ENCODE measurements at regions of chr11 and their contacts with region 1.

Region 1: GRCh38 chr11:17276236-17277023 is at the start of gene NUCB2:
- DNase-seq: peak; percentile 89 to 98 (median 96)
- ATAC-seq: peak; percentile 90
- H3K4me3 ChIP-seq: peak within 1 kb of the TSS; percentile 77 to 83
- H3K4me3 Mint-ChIP-seq: peak within 1 kb of the TSS; percentile 84
- H3K27ac ChIP-seq: peak within 1 kb of the TSS; percentile 79 to 86
- H3K27ac Mint-ChIP-seq: peak within 1 kb of the TSS; percentile 91
- H3K4me1 ChIP-seq: peaks cover 37% of the 10 kb centered on the region
- H3K4me1 Mint-ChIP-seq: peaks cover 39% of the 10 kb centered on the region
- H3K27me3 ChIP-seq: no peaks in the 10 kb centered on the region
- H3K27me3 Mint-ChIP-seq: no peaks in the 10 kb centered on the region
- CTCF ChIP-seq: no peak
- total RNA-seq, gene NUCB2: 105 TPM

Region 2: GRCh38 chr11:17077520-17078401 is 198.7 kb before region 1 on chr11 and contains the start of gene RPS13:
- CTCF ChIA-PET with region 1: no interaction called
- POLR2A ChIA-PET with region 1: no interaction called
- intact Hi-C with region 1: loop called (anchors 2 to 5 kb)
- DNase-seq: peak; percentile 88 to 99 (median 95)
- ATAC-seq: peak; percentile 94
- H3K4me3 ChIP-seq: peak within 1 kb of the TSS; percentile 86 to 95
- H3K4me3 Mint-ChIP-seq: peak within 1 kb of the TSS; percentile 99
- H3K27ac ChIP-seq: peak within 1 kb of the TSS; percentile 92 to 96
- H3K27ac Mint-ChIP-seq: peak within 1 kb of the TSS; percentile 99
- H3K4me1 ChIP-seq: peaks cover 25% of the 10 kb centered on the region
- H3K4me1 Mint-ChIP-seq: peaks cover 48% of the 10 kb centered on the region
- H3K27me3 ChIP-seq: no peaks in the 10 kb centered on the region
- H3K27me3 Mint-ChIP-seq: no peaks in the 10 kb centered on the region
- CTCF ChIP-seq: no peak
- total RNA-seq, gene RPS13: 2,112 to 2,169 TPM

Region 3: GRCh38 chr11:17230867-17231851 is 45.3 kb before region 1 on chr11:
- CTCF ChIA-PET with region 1: interaction called, 17 read pairs
- POLR2A ChIA-PET with region 1: no interaction called
- intact Hi-C with region 1: loop called (anchors 2 kb)
- DNase-seq: peak in 2 of 9 experiments; percentile 34 to 64
- ATAC-seq: peak; percentile 81
- H3K4me3 ChIP-seq: no peak overlapping the region
- H3K4me3 Mint-ChIP-seq: no peak overlapping the region
- H3K27ac ChIP-seq: no peak overlapping the region
- H3K27ac Mint-ChIP-seq: no peak overlapping the region
- H3K4me1 ChIP-seq: peaks cover 5% of the 10 kb centered on the region
- H3K4me1 Mint-ChIP-seq: peaks cover 13% of the 10 kb centered on the region
- H3K27me3 ChIP-seq: no peaks in the 10 kb centered on the region
- H3K27me3 Mint-ChIP-seq: no peaks in the 10 kb centered on the region
- CTCF ChIP-seq: no peak

Region 4: GRCh38 chr11:17298302-17298701 is 21.9 kb after region 1 on chr11:
- CTCF ChIA-PET with region 1: no interaction called
- POLR2A ChIA-PET with region 1: interaction called, 3 read pairs
- intact Hi-C with region 1: loop called in 1 of 2 experiments (anchors 2 kb)
- DNase-seq: peak in 1 of 9 experiments; percentile 37
- ATAC-seq: peak; percentile 67
- H3K4me3 ChIP-seq: no peak overlapping the region
- H3K4me3 Mint-ChIP-seq: no peak overlapping the region
- H3K27ac ChIP-seq: no peak overlapping the region
- H3K27ac Mint-ChIP-seq: peak overlapping the region; percentile 82
- H3K4me1 ChIP-seq: peaks cover 11% of the 10 kb centered on the region
- H3K4me1 Mint-ChIP-seq: peaks cover 39% of the 10 kb centered on the region
- H3K27me3 ChIP-seq: no peaks in the 10 kb centered on the region
- H3K27me3 Mint-ChIP-seq: no peaks in the 10 kb centered on the region
- CTCF ChIP-seq: no peak

Region 5: DNA sequence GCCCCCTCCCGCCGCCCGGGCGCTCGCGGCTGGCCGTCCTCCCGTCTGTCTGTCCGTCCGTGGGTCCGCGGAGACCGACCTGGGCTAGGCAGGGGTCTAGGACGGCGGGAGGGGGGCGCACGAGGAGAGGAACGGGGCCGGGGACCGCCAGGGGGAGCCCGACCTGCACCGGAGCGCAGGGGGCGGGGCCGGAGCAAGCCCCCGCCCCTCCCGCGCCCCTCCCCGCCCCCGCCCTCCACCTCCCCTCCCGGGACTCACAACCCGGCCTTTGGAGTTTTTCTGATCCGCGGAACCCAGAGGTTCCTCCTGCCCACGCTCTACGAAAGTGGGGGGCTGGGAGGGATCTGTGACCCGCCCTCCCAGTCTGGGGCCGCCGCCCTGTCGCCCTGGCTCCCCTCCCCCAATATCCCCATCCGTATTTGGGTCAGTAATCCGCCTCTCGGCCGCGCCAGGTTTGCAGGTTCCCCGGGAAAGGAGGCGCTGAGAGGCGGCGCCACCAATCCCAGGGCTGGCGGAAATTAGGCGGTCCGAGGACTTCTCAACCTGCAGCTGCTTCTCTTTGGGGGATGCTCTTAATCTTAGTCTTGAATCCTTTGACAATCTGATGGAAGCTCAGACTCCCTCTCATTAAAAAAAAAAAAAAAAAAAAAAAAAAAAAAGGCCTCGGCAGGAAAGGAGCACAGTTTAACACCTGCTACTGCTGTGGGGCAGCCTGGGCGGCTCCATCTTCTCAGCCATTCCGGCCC is 113.0 kb after region 1 on chr11:
- CTCF ChIA-PET with region 1: interaction called, 4 read pairs
- POLR2A ChIA-PET with region 1: interaction called, 5 read pairs
- intact Hi-C with region 1: loop called (anchors 1 kb)
- DNase-seq: peak; percentile 60 to 89 (median 83)
- ATAC-seq: peak; percentile 91
- H3K4me3 ChIP-seq: peak overlapping the region; percentile 69 to 75
- H3K4me3 Mint-ChIP-seq: peak overlapping the region; percentile 85
- H3K27ac ChIP-seq: no peak overlapping the region
- H3K27ac Mint-ChIP-seq: no peak overlapping the region
- H3K4me1 ChIP-seq: peaks cover 9% of the 10 kb centered on the region
- H3K4me1 Mint-ChIP-seq: peaks cover 8% of the 10 kb centered on the region
- H3K27me3 ChIP-seq: peaks cover 0 to 2% of the 10 kb centered on the region in 2 experiments
- H3K27me3 Mint-ChIP-seq: no peaks in the 10 kb centered on the region
- CTCF ChIP-seq: peak; percentile 71